Heart left ventricle (tissue), 16 donors: ENCODE measurements at regions of chr14 and their contacts with region 1.

Region 1: GRCh38 chr14:92680781-92681650 is 67.4 kb downstream of the LGMN start:
- DNase-seq: peak; percentile 64 to 86 (median 72)
- ATAC-seq: peak; percentile 27 to 73 (median 64)
- H3K4me3 ChIP-seq: no peak overlapping the region
- H3K27ac ChIP-seq: peak overlapping the region in 1 of 12 donors; percentile 64
- H3K4me1 ChIP-seq: peaks cover 0 to 25% (median 5%) of the 10 kb centered on the region in 12 donors
- H3K27me3 ChIP-seq: no peaks in the 10 kb centered on the region
- CTCF ChIP-seq: peak; percentile 82 to 93 (median 89)
- POLR2A ChIP-seq: no peak

Region 2: GRCh38 chr14:92121670-92122350 is 559.2 kb before region 1 on chr14 and contains the starts of genes CPSF2 and NDUFB1:
- intact Hi-C with region 1: loop called in 4 of 10 experiments (anchors 5 to 10 kb)
- DNase-seq: peak; percentile 88 to 91 (median 90)
- ATAC-seq: peak; percentile 91 to 95 (median 94)
- H3K4me3 ChIP-seq: peak within 1 kb of the TSS; percentile 59 to 97 (median 86)
- H3K27ac ChIP-seq: peak within 1 kb of the TSS; percentile 91 to 99 (median 96)
- H3K4me1 ChIP-seq: peaks cover 0 to 62% (median 33%) of the 10 kb centered on the region in 12 donors
- H3K27me3 ChIP-seq: no peaks in the 10 kb centered on the region
- CTCF ChIP-seq: peak in 1 of 12 donors; percentile 17
- POLR2A ChIP-seq: peak in 1 of 2 donors; percentile 57
- total RNA-seq, gene CPSF2: 24.5 to 51.7 (median 44.2) TPM
- total RNA-seq, gene NDUFB1: 295 to 1,551 (median 438) TPM

Region 3: GRCh38 chr14:92144708-92145107 is 536.3 kb before region 1 on chr14:
- intact Hi-C with region 1: loop called in 4 of 10 experiments (anchors 10 kb)
- DNase-seq: no peak
- ATAC-seq: no peak
- H3K4me3 ChIP-seq: no peak overlapping the region
- H3K27ac ChIP-seq: no peak overlapping the region
- H3K4me1 ChIP-seq: no peaks in the 10 kb centered on the region
- H3K27me3 ChIP-seq: no peaks in the 10 kb centered on the region
- CTCF ChIP-seq: no peak
- POLR2A ChIP-seq: no peak

Region 4: DNA sequence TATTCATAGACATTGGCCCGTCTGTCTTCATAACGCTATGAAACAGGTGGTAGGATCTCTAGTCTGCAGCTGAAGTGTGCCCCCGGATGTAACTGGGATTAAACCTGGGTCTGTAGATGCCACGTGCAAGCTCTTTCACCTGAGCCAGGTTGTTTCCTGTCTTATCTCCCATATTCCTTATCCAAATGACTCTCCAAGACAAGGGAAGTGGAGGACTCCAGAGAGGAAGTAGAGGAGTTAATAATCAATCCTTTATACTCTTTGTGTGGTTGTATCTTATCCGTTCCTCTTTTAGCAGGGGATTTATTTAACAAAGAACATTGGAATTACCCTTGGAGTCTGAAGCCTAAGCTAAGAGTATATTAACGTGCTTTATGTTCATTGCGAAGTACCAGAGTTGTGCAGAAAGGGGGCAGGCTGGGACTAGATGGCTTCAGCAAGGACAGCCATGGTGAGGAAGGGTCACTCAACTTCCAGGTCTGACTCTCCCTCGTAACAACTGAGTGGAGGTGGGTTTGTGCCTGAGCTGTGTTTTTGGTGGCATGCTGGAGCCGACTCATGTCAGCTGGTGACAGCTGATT is 84.6 kb before region 1 on chr14:
- intact Hi-C with region 1: loop called in 3 of 10 experiments (anchors 5 to 10 kb)
- DNase-seq: no peak
- ATAC-seq: no peak
- H3K4me3 ChIP-seq: no peak overlapping the region
- H3K27ac ChIP-seq: no peak overlapping the region
- H3K4me1 ChIP-seq: peaks cover 0 to 20% (median 0%) of the 10 kb centered on the region in 12 donors
- H3K27me3 ChIP-seq: no peaks in the 10 kb centered on the region
- CTCF ChIP-seq: no peak
- POLR2A ChIP-seq: no peak

Region 5: GRCh38 chr14:92612988-92613658 is 67.9 kb before region 1 on chr14:
- intact Hi-C with region 1: loop called in 1 of 10 experiments (anchors 5 kb)
- DNase-seq: peak in 1 of 5 donors; percentile 79
- ATAC-seq: peak in 3 of 4 donors; percentile 31 to 44 (median 38)
- H3K4me3 ChIP-seq: no peak overlapping the region
- H3K27ac ChIP-seq: no peak overlapping the region
- H3K4me1 ChIP-seq: peaks cover 0 to 43% (median 0%) of the 10 kb centered on the region in 12 donors
- H3K27me3 ChIP-seq: no peaks in the 10 kb centered on the region
- CTCF ChIP-seq: peak; percentile 43 to 72 (median 62)
- POLR2A ChIP-seq: no peak